ENCODE measurements at regions of chr22 and their contacts with region 1.

Region 1: GRCh38 chr22:50326959-50327710 is at the start of gene DENND6B:
- DNase-seq: peak; percentile 86 to 96 (median 94)
- ATAC-seq: peak; percentile 94 to 97
- H3K4me3 ChIP-seq: peak within 1 kb of the TSS; percentile 89
- H3K27ac ChIP-seq: peak within 1 kb of the TSS; percentile 97
- H3K4me1 ChIP-seq: no peaks in the 10 kb centered on the region
- H3K27me3 ChIP-seq: no peaks in the 10 kb centered on the region
- total RNA-seq, gene DENND6B: 2.0 to 3.1 (median 2.5) TPM

Region 2: DNA sequence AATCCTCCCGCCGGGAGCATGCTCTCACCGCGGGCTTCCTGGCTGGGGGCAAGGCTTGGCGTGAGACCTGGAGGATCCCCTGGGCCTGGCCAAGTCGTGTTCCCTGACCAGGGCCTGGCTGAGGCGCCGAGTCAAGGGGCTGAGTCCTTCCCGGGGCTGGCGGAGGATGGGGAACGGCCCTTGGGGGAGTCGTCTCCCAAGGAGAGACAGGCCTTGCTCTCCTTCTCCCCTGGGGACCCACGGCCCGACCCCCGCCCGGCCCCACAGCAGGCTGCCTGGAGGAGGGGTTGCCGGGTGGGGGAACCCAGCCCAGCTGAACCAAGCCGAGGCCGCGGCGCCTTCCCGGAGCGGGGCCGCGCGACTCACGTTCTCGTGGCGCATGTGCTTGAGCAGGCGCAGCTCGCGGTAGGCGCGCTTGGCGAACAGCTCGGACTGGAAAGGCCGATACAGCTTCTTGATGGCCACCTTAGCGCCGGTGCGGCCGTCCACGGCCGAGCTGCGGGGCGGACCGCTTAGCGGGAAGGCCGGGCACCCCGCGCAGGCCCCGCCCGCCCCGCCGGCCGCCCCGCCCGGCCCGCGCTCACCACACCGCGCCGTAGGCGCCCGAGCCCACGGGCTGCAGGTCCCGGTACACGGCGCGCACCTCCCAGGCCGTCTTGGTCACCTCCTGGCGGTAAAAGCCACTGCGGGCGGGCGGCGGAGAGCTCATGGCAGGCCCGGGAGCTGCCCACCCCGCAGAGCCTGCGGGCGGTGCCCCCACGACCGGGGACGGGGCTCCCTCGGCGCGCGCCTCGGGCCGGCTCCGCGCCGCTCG is 66.1 kb before region 1 on chr22:
- intact Hi-C with region 1: loop called in 1 of 4 experiments (anchors 5 kb)
- DNase-seq: peak in 2 of 3 donors; percentile 54 to 83
- ATAC-seq: peak; percentile 3 to 4
- H3K4me3 ChIP-seq: peak overlapping the region; percentile 68
- H3K27ac ChIP-seq: peak overlapping the region; percentile 42
- H3K4me1 ChIP-seq: no peaks in the 10 kb centered on the region
- H3K27me3 ChIP-seq: no peaks in the 10 kb centered on the region

Region 3: GRCh38 chr22:50276143-50276542 is 51.0 kb before region 1 on chr22:
- intact Hi-C with region 1: loop called (anchors 5 kb)
- DNase-seq: peak; percentile 67 to 90 (median 88)
- ATAC-seq: peak; percentile 73 to 82
- H3K4me3 ChIP-seq: no peak overlapping the region
- H3K27ac ChIP-seq: no peak overlapping the region
- H3K4me1 ChIP-seq: no peaks in the 10 kb centered on the region
- H3K27me3 ChIP-seq: no peaks in the 10 kb centered on the region